HEK293T (cell line): ENCODE measurements at regions of chr7 and their contacts with region 1.

Region 1: DNA sequence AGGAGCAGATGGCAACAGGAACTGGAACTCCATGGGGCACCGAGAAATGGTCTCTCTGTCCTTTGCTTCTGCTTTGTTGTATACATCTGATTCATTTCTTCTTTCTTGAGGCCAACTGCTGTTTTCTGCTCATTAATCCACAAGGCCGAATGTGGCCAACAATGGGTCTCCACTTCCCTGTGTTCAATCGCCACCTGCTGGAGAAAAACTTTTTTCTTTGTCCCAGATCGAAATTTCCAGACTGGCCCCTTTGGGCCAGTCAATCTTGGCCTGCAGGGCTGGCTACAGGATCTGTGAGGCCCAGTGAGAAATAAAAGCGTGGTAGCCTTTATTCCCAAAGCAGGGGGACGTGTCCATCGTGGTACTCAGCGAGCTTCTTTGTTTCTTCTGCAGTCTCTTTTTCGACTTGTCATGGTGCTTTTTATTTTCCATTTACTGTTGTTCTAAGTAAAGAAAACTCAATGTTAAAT is 58.8 kb downstream of the PARP12 start:
- DNase-seq: peak; percentile 73

Region 2: DNA sequence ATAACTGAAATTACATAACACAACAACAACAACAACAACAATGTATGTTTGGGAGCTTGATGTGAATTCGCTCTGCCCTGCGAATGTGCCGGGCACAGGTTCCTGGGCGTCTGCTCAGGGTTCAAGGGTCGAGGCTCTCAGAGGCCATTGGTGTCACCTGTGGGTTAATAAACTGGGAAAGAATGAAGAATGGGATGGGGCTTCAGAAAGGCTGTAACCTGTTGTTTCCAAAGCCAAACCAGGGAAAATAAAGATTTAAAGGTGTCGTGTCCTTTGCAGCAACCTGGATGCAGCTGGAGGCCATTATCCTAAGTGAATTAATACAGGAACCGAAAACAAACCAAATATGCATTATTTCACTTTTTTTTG is 503.2 kb before region 1 on chr7:
- CTCF ChIA-PET with region 1: interaction called, 11 read pairs
- POLR2A ChIA-PET with region 1: no interaction called
- DNase-seq: no peak

Region 3: DNA sequence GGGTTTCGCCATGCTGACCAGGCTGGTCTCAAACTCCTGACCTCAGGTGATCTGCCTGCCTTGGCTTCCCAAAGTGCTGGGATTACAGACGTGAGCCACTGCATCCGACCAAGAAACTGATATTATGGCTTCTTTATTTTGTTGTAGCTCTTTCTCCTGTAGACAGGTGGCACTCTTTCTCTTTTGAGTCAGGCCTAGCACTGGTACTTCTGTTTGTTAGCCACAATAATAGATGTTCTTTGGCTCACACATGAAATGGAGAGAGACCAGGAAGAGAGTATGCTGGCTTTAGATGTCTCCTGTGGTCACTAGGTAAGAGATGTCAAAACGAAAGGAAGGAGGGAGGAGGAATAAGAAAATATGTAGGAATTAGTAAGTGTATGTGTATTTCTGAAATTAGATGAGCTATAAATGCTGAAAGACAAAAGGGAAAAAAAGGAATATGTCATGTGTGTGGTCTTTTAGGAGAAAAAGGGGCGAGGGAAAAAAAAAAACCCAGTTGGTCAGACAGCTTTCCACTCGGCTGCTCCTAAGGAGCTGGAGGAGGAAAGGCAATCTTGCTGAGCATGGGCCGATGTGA is 401.7 kb before region 1 on chr7:
- CTCF ChIA-PET with region 1: interaction called, 14 read pairs
- POLR2A ChIA-PET with region 1: no interaction called
- DNase-seq: peak; percentile 58

Region 4: GRCh38 chr7:139620676-139621344 is 383.1 kb before region 1 on chr7:
- CTCF ChIA-PET with region 1: interaction called, 14 read pairs
- POLR2A ChIA-PET with region 1: no interaction called
- DNase-seq: peak; percentile 85

Region 5: GRCh38 chr7:139645572-139646523 is 358.1 kb before region 1 on chr7:
- CTCF ChIA-PET with region 1: interaction called, 35 read pairs
- POLR2A ChIA-PET with region 1: no interaction called
- DNase-seq: peak; percentile 89

Region 6: GRCh38 chr7:139915864-139916716 is 87.9 kb before region 1 on chr7:
- CTCF ChIA-PET with region 1: no interaction called
- POLR2A ChIA-PET with region 1: no interaction called
- DNase-seq: no peak

Region 7: DNA sequence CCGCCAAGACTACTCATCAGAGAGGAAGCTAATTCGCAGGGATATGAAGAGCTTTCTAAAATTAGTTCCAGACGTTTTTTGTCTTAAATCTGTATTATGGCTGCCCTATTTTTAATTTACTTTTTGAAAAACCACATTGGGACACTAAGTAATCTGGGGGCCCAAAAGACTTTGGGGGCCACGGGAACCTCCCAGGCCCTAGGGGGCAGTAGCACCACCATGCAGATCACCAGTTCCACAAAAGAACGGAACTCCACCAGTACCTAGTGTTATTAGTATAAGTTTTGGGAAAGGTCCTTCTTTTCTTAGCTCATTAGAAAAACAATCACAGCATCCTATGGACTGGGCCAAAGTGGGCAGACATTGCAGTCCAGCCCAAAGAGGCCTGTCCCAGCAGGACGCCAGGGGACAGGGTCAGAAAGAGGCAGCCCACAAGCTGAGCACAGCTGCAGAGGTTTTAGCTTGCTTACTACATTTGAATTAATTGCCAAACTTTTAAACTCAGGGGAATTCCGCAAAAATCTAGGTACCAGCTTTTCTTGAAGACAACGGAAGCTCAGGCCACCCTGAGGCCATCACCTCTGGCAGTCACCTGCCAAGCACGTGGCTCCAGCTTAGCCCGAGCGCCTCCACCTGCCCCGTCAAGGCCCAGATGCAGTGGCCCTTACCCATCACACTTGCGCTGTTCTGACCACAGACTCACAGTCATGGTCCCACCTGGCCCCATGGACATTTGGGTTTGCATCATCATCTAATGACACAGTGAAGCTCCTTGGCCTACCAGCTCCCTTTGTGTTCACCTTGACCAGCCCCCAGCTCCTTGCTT is 16.0 kb before region 1 on chr7:
- CTCF ChIA-PET with region 1: interaction called, 13 read pairs
- POLR2A ChIA-PET with region 1: no interaction called
- DNase-seq: no peak

Region 8: DNA sequence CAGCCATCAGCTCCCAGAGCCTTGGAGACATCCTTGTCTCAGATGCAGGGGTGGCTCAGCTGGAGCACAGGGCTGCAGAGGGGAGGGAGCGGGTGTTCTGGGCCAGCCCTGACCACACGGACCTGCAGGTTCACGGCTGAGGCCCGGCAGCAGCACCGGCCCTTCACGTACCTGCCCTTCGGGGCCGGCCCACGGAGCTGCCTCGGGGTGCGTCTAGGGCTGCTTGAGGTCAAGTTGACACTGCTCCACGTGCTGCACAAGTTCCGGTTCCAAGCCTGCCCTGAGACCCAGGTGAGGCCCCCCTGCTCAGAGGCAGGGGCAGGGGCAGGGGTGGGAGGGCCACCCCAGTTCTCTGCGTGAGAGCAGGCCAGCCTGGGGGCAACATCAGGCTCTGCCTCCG is 13.6 kb after region 1 on chr7:
- CTCF ChIA-PET with region 1: interaction called, 15 read pairs
- POLR2A ChIA-PET with region 1: no interaction called
- DNase-seq: no peak